ENCODE measurements at regions of chr14 and their contacts with region 1.

Region 1: DNA sequence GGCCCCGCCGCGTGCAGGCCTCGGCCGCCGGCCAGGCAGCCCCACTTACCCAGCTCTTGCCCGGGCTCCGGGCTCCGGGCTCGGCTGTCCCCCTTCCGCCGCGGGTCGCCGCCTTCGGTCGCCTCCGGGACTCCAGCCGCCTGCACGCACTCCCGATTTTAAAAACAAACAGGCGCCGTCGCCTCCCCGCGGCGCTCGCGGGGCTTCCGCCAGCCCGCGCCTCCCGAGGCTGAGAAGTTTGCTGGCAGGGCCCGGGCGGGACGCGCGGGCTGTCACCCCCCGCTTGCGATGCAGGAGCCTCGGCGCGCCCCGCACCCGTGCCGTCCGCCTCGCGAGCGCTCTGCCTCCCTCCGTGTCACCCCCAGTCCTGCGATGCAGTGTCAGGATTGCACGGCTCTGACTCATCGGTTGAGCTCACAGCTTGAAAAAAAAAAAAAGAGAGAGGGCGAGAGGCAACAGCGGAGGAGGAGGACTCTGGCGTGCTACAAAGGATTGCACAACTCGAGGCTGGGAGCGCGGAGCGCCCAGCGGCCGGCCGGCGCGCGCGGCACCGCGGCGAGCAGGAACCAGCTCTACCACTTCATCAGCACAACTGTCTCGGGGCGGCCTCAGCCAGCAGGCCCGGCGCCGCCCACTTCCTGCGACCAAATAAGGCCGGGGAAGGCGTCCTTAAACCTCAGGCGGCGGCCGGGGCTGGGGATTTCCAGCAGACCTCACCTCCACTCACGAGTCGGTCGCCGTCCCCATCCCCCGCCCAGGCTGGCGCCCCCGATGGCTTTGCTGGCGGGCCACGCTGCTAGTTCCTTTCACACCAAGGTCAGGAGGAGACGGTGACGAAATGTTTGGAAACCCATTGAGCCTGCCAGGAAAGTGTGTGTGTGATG is 45.8 kb upstream of the PNMA1 start:
- DNase-seq: peak; percentile 99
- H3K4me3 Mint-ChIP-seq: peak overlapping the region; percentile 91
- H3K27ac Mint-ChIP-seq: peak overlapping the region; percentile 96
- H3K4me1 Mint-ChIP-seq: peaks cover 70% of the 10 kb centered on the region
- H3K27me3 Mint-ChIP-seq: peaks cover 2% of the 10 kb centered on the region

Region 2: DNA sequence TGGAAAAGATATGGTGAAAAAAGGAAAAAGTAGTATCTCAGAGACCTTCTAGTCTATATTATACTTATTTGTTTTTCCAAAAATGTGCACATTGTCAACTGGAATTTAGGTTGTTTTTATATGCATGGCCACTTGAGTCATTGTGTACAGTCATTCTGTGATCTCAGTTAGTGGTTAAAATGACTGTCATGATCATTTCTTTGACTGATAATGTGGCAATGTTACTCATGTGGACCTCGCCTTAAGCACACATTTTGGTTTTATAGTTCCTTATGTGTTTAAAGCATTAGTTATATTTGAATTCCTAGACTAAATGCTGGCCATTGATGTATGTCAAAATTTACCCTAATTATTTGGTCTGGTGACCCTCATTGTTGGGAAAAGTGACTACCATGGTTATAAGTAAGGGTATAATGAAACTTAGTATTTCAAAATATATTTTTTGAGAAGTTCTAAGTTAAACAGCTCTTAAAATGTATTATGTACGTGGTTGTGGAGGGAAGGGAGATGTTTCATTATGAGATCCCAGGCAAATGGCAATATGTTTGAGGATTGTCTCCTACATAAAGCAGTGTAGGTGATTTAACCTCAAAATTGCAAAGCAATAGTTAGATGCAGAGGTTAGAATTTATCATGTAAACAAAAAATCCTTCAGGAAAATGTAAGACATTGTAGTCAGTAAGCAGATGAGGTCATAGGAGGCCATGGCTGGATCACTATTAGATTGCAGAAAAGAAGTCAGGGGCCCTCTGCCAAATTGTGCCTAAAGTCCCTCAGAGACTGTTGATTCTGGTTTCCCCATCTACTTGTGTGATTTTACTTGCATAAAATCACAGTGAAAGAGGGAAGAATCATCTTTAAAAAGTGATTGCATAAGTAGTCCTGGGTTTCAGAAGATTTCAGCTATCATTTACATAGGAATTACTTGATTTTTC is 63.2 kb before region 1 on chr14:
- intact Hi-C with region 1: loop called (anchors 1 kb)
- DNase-seq: peak; percentile 56
- H3K4me3 Mint-ChIP-seq: peak overlapping the region; percentile 69
- H3K27ac Mint-ChIP-seq: peak overlapping the region; percentile 90
- H3K4me1 Mint-ChIP-seq: peaks cover 26% of the 10 kb centered on the region
- H3K27me3 Mint-ChIP-seq: no peaks in the 10 kb centered on the region

Region 3: GRCh38 chr14:73728717-73729330 is 31.1 kb before region 1 on chr14:
- intact Hi-C with region 1: loop called (anchors 1 kb)
- DNase-seq: peak; percentile 96
- H3K4me3 Mint-ChIP-seq: peak overlapping the region; percentile 16
- H3K27ac Mint-ChIP-seq: peak overlapping the region; percentile 83
- H3K4me1 Mint-ChIP-seq: peaks cover 29% of the 10 kb centered on the region
- H3K27me3 Mint-ChIP-seq: no peaks in the 10 kb centered on the region

Region 4: DNA sequence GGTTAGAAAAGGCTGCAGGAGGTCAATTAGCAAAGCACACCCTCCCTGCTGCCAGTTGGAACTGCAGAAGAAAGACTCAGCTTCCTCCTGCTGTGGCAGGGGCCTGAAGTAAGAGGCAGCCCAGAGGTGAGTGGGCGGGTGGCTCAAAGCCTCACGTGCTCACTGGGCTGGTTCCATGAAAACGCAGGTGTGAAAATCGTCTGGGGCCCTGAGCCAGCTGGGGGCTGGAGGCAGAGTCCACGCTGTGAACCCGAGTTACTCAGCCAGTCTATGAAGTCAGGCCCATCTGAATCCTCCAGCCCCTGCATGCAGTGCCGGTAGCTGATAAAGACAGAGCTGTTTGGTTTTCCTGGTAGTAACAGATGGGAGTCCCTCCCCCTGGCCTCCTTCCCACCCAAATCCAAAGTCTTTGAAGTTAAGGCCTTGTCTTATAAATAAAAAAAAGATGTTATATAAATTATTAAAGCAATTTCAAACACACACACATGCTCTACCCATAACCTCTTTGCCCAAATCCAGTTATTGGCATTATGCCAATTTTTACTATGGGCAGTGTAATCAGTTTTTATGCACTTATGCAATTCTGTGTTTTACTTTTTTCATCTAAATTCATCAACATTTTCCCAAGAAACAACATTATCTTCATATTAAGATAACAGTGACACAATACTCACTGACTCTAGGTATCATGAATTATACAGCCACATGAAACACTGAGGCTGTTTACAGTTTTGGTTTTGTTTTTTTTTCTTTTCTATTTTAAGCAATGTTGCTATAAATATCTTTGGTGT is 12.1 kb after region 1 on chr14:
- intact Hi-C with region 1: loop called (anchors 1 kb)
- DNase-seq: peak; percentile 87
- H3K4me3 Mint-ChIP-seq: peak overlapping the region; percentile 49
- H3K27ac Mint-ChIP-seq: peak overlapping the region; percentile 81
- H3K4me1 Mint-ChIP-seq: peaks cover 55% of the 10 kb centered on the region
- H3K27me3 Mint-ChIP-seq: no peaks in the 10 kb centered on the region

Region 5: GRCh38 chr14:74084277-74085046 is 324.5 kb after region 1 on chr14 and contains the starts of genes ALDH6A1 and LIN52:
- intact Hi-C with region 1: loop called (anchors 2 kb)
- DNase-seq: peak; percentile 100
- H3K4me3 Mint-ChIP-seq: peak within 1 kb of the TSS; percentile 99
- H3K27ac Mint-ChIP-seq: peak within 1 kb of the TSS; percentile 97
- H3K4me1 Mint-ChIP-seq: peaks cover 35% of the 10 kb centered on the region
- H3K27me3 Mint-ChIP-seq: no peaks in the 10 kb centered on the region
- total RNA-seq, gene ALDH6A1: 10.8 and 11.8 TPM in 2 replicates
- total RNA-seq, gene LIN52: 15.2 and 21.5 TPM in 2 replicates

Measured in activated CD4-positive, alpha-beta T cell treated with anti-CD3 and anti-CD28 coated beads, Interleukin-2, amount 10 ng/mL, durations not matched to agents 24 days and 14 days (primary cell).